ENCODE measurements at regions of chr9 and their contacts with region 1.

Region 1: DNA sequence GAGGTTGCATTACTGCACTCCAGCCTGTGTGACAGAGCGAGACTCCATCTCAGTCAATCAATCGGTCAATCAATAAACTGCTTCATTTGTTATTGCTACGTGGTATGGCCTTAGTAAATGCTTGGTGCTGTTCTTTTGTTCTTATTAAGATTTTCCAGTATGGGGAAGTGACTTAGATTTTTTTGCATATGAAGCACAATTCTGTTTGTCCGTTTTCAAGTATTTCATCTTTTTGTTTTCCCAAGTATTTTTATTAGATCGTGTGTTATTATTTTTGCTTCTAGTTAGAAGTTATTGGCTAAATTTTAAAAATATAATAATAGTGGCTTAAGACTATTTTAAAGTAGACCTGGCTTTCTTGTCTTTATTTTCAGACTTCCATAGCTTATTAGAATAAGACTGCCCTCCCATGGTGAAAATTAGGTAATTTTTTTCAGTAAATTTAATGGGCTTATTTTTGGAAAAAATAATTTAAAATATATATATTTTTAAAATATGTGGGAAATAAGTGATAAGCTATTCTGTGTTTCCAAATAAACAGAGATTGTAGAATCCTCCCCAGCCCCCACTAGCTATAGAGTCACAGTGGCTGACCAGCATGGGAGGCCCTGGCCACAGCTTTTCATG is 14.7 kb upstream of the OMD start:
- DNase-seq: peak in 2 of 9 experiments; percentile 9 to 34
- ATAC-seq: no peak
- H3K4me3 ChIP-seq: no peak overlapping the region
- H3K4me3 Mint-ChIP-seq: no peak overlapping the region
- H3K27ac ChIP-seq: peak overlapping the region in 1 of 2 experiments; percentile 74
- H3K27ac Mint-ChIP-seq: no peak overlapping the region
- H3K4me1 ChIP-seq: no peaks in the 10 kb centered on the region
- H3K4me1 Mint-ChIP-seq: peaks cover 3% of the 10 kb centered on the region
- H3K27me3 ChIP-seq: no peaks in the 10 kb centered on the region
- H3K27me3 Mint-ChIP-seq: no peaks in the 10 kb centered on the region
- CTCF ChIP-seq: peak; percentile 13

Region 2: GRCh38 chr9:92342825-92343488 is 96.1 kb before region 1 on chr9:
- CTCF ChIA-PET with region 1: no interaction called
- POLR2A ChIA-PET with region 1: no interaction called
- intact Hi-C with region 1: loop called (anchors 5 kb)
- DNase-seq: no peak
- ATAC-seq: no peak
- H3K4me3 ChIP-seq: no peak overlapping the region
- H3K4me3 Mint-ChIP-seq: no peak overlapping the region
- H3K27ac ChIP-seq: no peak overlapping the region
- H3K27ac Mint-ChIP-seq: no peak overlapping the region
- H3K4me1 ChIP-seq: no peaks in the 10 kb centered on the region
- H3K4me1 Mint-ChIP-seq: no peaks in the 10 kb centered on the region
- H3K27me3 ChIP-seq: no peaks in the 10 kb centered on the region
- H3K27me3 Mint-ChIP-seq: no peaks in the 10 kb centered on the region
- CTCF ChIP-seq: no peak

Region 3: GRCh38 chr9:92349771-92350739 is 89.0 kb before region 1 on chr9:
- CTCF ChIA-PET with region 1: no interaction called
- POLR2A ChIA-PET with region 1: no interaction called
- intact Hi-C with region 1: loop called in 1 of 2 experiments (anchors 5 kb)
- DNase-seq: no peak
- ATAC-seq: no peak
- H3K4me3 ChIP-seq: no peak overlapping the region
- H3K4me3 Mint-ChIP-seq: no peak overlapping the region
- H3K27ac ChIP-seq: no peak overlapping the region
- H3K27ac Mint-ChIP-seq: no peak overlapping the region
- H3K4me1 ChIP-seq: no peaks in the 10 kb centered on the region
- H3K4me1 Mint-ChIP-seq: no peaks in the 10 kb centered on the region
- H3K27me3 ChIP-seq: no peaks in the 10 kb centered on the region
- H3K27me3 Mint-ChIP-seq: no peaks in the 10 kb centered on the region
- CTCF ChIP-seq: no peak

Region 4: GRCh38 chr9:92564504-92564903 is 125.5 kb after region 1 on chr9:
- CTCF ChIA-PET with region 1: no interaction called
- POLR2A ChIA-PET with region 1: no interaction called
- intact Hi-C with region 1: no loop called
- DNase-seq: no peak
- ATAC-seq: no peak
- H3K4me3 ChIP-seq: no peak overlapping the region
- H3K4me3 Mint-ChIP-seq: no peak overlapping the region
- H3K27ac ChIP-seq: no peak overlapping the region
- H3K27ac Mint-ChIP-seq: no peak overlapping the region
- H3K4me1 ChIP-seq: no peaks in the 10 kb centered on the region
- H3K4me1 Mint-ChIP-seq: no peaks in the 10 kb centered on the region
- H3K27me3 ChIP-seq: no peaks in the 10 kb centered on the region
- H3K27me3 Mint-ChIP-seq: no peaks in the 10 kb centered on the region
- CTCF ChIP-seq: no peak